Activated CD8-positive, alpha-beta T cell treated with anti-CD3 and anti-CD28 coated beads, Interleukin-2, amount 10 ng/mL, durations not matched to agents 7 days and 5 days (primary cell): ENCODE measurements at regions of chr7 and their contacts with region 1.

Region 1: DNA sequence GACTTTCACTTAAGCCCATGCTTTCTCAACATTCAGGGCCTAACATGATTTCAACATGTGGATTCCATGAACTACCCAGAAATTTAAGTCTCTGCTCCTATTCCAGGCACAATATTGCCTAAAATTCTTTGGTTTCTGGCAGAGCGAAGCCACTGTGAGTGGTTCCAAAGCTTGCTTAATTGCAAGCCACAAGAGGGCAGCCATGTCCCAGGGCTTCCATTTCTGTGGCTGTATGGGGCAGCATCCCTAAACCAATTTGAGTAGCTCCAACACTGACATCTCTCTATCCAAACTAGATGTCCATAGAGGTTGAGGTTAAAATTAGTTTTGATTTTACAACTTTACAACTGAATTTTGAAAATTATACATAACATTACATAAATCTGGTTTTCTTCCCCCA is 56.3 kb upstream of the MDFIC start:
- DNase-seq: peak; percentile 69
- ATAC-seq: peak; percentile 76
- H3K4me3 Mint-ChIP-seq: no peak overlapping the region
- H3K27ac Mint-ChIP-seq: no peak overlapping the region
- H3K4me1 Mint-ChIP-seq: no peaks in the 10 kb centered on the region
- H3K27me3 Mint-ChIP-seq: peaks cover 5% of the 10 kb centered on the region

Region 2: GRCh38 chr7:114630201-114630990 is 235.2 kb before region 1 on chr7:
- CTCF ChIA-PET with region 1: no interaction called
- POLR2A ChIA-PET with region 1: no interaction called
- DNase-seq: no peak
- ATAC-seq: no peak
- H3K4me3 Mint-ChIP-seq: no peak overlapping the region
- H3K27ac Mint-ChIP-seq: no peak overlapping the region
- H3K4me1 Mint-ChIP-seq: no peaks in the 10 kb centered on the region
- H3K27me3 Mint-ChIP-seq: no peaks in the 10 kb centered on the region

Region 3: DNA sequence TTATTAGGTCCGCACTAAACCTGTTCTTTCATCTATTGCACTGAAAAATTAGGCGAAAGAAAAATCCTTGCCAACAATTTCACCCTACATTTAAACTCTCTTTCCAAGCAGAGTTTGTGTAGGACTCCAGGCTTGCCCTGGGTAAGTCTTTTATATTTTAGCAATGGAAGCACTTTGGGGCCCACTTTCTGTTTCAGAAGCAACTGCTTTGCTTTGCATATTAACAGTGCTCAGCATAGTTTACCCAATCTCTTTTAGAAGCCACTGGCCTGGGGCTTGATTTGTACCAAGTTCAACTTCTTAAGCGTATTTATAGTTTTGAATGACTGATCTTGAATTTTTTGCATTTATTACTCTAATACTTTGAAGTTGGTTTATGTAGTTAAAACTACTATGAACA is 22.5 kb before region 1 on chr7:
- CTCF ChIA-PET with region 1: no interaction called
- POLR2A ChIA-PET with region 1: no interaction called
- DNase-seq: no peak
- ATAC-seq: no peak
- H3K4me3 Mint-ChIP-seq: no peak overlapping the region
- H3K27ac Mint-ChIP-seq: no peak overlapping the region
- H3K4me1 Mint-ChIP-seq: no peaks in the 10 kb centered on the region
- H3K27me3 Mint-ChIP-seq: no peaks in the 10 kb centered on the region

Region 4: GRCh38 chr7:114959931-114960330 is 94.4 kb after region 1 on chr7:
- CTCF ChIA-PET with region 1: no interaction called
- POLR2A ChIA-PET with region 1: no interaction called
- DNase-seq: no peak
- ATAC-seq: no peak
- H3K4me3 Mint-ChIP-seq: no peak overlapping the region
- H3K27ac Mint-ChIP-seq: no peak overlapping the region
- H3K4me1 Mint-ChIP-seq: peaks cover 28% of the 10 kb centered on the region
- H3K27me3 Mint-ChIP-seq: no peaks in the 10 kb centered on the region

Region 5: DNA sequence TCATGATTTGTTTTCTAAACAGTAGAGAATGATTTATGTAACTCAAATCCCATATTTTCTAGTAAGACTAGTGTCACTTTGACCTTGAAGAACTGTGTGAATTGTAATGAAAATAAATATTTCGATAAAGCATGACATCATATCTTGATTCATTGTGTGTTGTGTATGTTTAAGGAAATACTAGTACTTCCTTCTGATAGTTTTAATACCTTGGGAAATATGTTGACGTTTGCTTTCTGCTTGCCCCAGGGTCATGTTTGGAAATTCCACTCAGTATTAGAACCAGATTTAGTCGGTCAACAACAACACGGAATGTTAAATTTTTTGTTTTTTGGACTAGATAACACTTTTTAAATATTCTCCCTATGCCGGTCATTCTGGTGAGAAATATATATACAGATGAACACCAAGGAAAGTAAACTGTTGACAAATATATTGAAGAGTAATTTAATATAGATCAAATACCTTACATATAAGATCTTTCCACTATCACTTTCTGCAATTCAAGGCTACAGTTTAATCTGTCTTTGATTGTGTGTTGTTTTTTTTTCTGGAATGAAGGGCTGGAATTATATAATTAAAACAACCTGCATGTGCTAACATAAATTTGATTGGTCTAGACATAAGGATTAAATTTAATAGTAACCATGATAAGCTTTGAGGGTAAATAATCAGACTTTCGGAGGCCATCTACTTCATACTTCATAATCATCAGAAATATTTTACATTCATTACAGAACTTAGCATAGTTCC is 182.6 kb after region 1 on chr7:
- CTCF ChIA-PET with region 1: no interaction called
- POLR2A ChIA-PET with region 1: no interaction called
- DNase-seq: no peak
- ATAC-seq: no peak
- H3K4me3 Mint-ChIP-seq: no peak overlapping the region
- H3K27ac Mint-ChIP-seq: no peak overlapping the region
- H3K4me1 Mint-ChIP-seq: no peaks in the 10 kb centered on the region
- H3K27me3 Mint-ChIP-seq: peaks cover 2% of the 10 kb centered on the region

Region 6: GRCh38 chr7:115217373-115217772 is 351.8 kb after region 1 on chr7:
- CTCF ChIA-PET with region 1: interaction called, 61 read pairs
- POLR2A ChIA-PET with region 1: no interaction called
- DNase-seq: no peak
- ATAC-seq: no peak
- H3K4me3 Mint-ChIP-seq: no peak overlapping the region
- H3K27ac Mint-ChIP-seq: no peak overlapping the region
- H3K4me1 Mint-ChIP-seq: peaks cover 11% of the 10 kb centered on the region
- H3K27me3 Mint-ChIP-seq: peaks cover 4% of the 10 kb centered on the region